ENCODE measurements at regions of chr16 and their contacts with region 1.

Region 1: GRCh38 chr16:14462811-14463210 is 167.2 kb downstream of the PARN start:
- DNase-seq: no peak
- ATAC-seq: no peak
- H3K4me3 ChIP-seq: no peak overlapping the region
- H3K27ac ChIP-seq: no peak overlapping the region
- H3K4me1 ChIP-seq: no peaks in the 10 kb centered on the region
- H3K27me3 ChIP-seq: no peaks in the 10 kb centered on the region
- CTCF ChIP-seq: no peak
- POLR2A ChIP-seq: no peak

Region 2: DNA sequence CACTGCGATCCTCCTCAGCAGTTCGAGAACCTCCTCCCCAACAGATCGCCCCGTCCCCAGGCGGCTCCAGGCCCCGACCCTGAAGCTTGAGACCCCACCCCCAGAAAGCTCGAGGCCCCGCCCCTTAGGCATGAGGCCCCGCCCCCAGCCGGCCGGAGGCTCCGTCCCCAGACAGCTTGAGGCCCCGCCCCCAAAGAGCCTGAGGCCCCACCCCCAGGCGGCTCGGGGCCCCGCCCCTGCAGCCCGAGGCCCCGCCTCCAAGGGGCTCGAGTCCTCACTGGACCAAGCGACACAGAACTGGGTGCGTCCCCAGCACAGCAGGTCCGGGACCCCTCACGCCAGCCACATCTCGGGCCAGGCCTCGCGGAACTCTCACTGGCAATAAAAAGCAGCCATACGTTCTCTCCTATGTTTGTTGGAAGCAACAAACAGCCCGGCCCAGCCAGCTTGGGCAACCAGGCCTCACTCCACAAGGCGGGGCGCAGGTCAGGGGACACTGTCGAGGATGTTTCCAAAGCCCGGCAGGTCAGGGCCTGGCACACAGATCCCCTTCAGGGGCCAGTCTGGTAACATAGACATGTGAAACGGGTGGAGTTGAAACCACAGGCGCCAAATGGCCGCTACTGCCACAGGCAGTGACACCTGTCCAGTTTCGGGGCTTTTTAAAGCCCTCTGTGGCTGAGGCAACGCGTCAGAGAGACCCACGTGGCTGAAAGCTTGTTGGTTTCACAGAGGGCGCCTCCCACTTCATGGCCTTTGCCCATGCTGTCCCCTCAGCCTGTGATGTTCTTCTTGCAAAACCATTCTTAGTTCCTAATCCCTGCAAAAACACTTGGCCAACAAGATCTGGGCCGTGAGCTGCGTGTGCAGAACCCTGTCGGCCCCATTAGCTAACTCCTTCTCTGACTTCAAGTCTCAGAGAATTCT is 56.9 kb before region 1 on chr16:
- intact Hi-C with region 1: loop called in 1 of 10 experiments (anchors 10 kb)
- DNase-seq: peak in 1 of 5 donors; percentile 3
- ATAC-seq: peak in 1 of 4 donors; percentile 17
- H3K4me3 ChIP-seq: no peak overlapping the region
- H3K27ac ChIP-seq: no peak overlapping the region
- H3K4me1 ChIP-seq: no peaks in the 10 kb centered on the region
- H3K27me3 ChIP-seq: no peaks in the 10 kb centered on the region
- CTCF ChIP-seq: no peak
- POLR2A ChIP-seq: no peak